PC-3 (cell line): ENCODE measurements at regions of chr3 and their contacts with region 1.

Region 1: GRCh38 chr3:157532529-157533297 is 29.5 kb upstream of the VEPH1 start:
- DNase-seq: peak; percentile 94
- ATAC-seq: peak; percentile 75
- H3K4me3 ChIP-seq: peak overlapping the region; percentile 52
- H3K27ac ChIP-seq: peak overlapping the region; percentile 68
- H3K4me1 ChIP-seq: peaks cover 47% of the 10 kb centered on the region
- H3K27me3 ChIP-seq: no peaks in the 10 kb centered on the region
- CTCF ChIP-seq: peak; percentile 96

Region 2: DNA sequence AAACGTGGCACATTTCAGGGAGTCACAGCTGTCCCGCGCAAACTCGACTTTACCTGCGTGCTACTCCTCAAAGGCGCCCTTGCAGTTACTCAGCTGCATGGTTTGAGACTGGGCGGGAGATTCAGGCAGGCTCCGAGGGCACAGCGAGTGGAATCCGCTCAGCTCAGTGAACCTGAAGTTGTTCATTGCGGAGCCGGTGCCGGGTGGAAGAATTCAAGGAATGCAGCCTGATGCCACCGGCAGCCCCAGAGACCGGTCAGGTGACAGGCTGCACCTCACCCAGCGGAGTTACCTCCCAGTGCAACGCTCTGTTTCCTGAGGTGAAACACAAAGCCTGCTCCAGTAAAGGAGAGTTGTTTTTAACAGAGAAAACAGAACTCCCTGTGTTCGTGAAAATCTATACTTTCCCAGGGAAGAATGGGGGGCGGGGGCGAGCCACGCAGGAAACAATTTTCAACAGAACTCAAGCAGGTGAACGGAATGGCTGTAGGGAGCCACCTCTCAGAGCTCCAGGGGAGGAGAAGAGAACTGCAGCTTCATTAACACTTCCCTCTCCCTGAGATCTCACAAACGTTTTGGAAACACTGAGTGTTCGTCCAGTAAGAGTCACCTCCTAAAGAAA is 33.3 kb before region 1 on chr3:
- CTCF ChIA-PET with region 1: interaction called, 6 read pairs
- POLR2A ChIA-PET with region 1: interaction called, 11 read pairs
- intact Hi-C with region 1: loop called (anchors 1 kb)
- DNase-seq: peak; percentile 93
- ATAC-seq: peak; percentile 89
- H3K4me3 ChIP-seq: peak overlapping the region; percentile 59
- H3K27ac ChIP-seq: peak overlapping the region; percentile 80
- H3K4me1 ChIP-seq: peaks cover 39% of the 10 kb centered on the region
- H3K27me3 ChIP-seq: no peaks in the 10 kb centered on the region
- CTCF ChIP-seq: 0 out of 2 replicates have a peak, but pooled peaks have one; percentile 12

Region 3: GRCh38 chr3:157542711-157543500 is 10.2 kb after region 1 on chr3:
- CTCF ChIA-PET with region 1: interaction called, 19 read pairs
- POLR2A ChIA-PET with region 1: interaction called, 3 read pairs
- intact Hi-C with region 1: no loop called
- DNase-seq: peak; percentile 85
- ATAC-seq: peak; percentile 96
- H3K4me3 ChIP-seq: peak overlapping the region; percentile 74
- H3K27ac ChIP-seq: no peak overlapping the region
- H3K4me1 ChIP-seq: 0 out of 2 replicates have a peak, but pooled peaks cover 4% of the 10 kb centered on the region
- H3K27me3 ChIP-seq: no peaks in the 10 kb centered on the region
- CTCF ChIP-seq: peak; percentile 45; the same call in 1 of the 2 replicates

Region 4: DNA sequence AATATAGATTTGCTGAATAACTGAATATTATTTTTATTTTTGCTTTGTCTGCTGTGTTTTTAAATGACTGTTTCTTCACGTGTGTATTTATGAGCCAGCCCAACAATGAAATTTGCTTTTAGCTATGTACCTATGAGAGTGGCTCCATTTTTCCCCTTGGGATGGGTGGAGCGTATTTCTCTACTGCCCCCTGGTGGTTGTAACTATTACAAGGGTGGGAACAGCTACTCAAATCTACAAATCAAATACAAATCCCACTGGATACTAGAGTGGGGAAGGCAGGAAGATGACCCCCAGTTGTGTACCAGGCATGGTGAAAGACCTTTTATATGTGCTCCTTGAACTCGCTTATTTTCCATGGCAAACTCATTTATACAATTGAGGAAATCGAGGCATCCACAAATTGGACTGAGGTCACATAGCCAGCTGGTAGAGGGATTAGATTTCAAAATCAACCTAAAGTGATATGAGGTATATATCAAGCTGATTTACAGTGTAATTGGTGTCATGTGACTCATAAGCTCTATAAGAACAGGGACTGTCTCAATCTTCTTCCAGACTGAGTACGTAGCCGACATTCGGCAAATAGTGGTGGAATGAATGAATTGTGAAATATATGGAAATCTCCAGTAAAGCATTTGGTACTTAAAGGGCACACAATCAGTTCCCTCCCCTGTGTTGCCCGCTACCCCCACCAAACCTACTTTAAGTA is 40.0 kb after region 1 on chr3:
- CTCF ChIA-PET with region 1: interaction called, 83 read pairs
- POLR2A ChIA-PET with region 1: interaction called, 9 read pairs
- intact Hi-C with region 1: loop called (anchors 1 kb)
- DNase-seq: peak; percentile 81
- ATAC-seq: peak; percentile 66
- H3K4me3 ChIP-seq: no peak overlapping the region
- H3K27ac ChIP-seq: no peak overlapping the region
- H3K4me1 ChIP-seq: peaks cover 15% of the 10 kb centered on the region
- H3K27me3 ChIP-seq: no peaks in the 10 kb centered on the region
- CTCF ChIP-seq: peak; percentile 95

Region 5: DNA sequence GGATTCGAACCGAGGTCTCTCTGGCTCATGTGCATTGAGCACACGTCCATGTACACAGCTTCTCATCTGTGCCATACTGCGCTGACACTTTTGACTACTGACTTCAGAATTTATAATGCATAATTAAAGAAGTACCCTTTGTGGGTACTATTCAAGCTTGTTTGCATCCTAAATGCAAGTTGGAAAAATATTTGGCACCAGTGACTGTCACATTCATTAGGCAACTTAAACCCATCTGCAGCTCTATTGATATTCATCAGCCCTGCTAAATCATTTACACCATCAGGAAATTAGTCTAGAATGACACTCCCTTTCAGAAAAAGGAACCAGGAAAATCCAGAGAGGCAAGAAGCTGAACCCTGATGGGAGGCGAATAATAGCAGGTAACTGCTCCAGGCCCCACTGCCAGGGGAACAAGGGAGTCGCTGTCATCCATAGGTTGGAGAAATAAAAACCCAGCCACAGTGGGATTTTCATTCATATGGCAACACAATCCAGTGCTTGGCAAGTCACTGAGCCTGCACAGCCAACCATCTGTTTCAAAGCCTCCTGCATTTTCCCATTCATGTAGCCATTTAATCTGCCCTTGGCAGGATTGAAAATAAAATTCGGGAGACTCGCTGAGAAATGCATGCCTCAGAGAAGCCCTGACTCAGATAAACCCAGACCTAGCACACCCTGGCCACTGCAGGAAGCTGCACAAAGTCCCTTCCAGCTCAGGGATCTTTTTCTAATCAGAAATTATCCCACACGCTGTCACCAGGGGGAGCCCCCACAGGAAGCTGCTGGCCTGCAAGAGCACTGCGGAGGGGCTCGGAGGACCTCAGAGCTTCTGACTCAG is 73.5 kb after region 1 on chr3:
- CTCF ChIA-PET with region 1: interaction called, 22 read pairs
- POLR2A ChIA-PET with region 1: interaction called, 4 read pairs
- intact Hi-C with region 1: loop called (anchors 2 kb)
- DNase-seq: peak; percentile 90
- ATAC-seq: peak; percentile 99
- H3K4me3 ChIP-seq: peak overlapping the region; percentile 21; the same call in 1 of the 2 replicates
- H3K27ac ChIP-seq: no peak overlapping the region
- H3K4me1 ChIP-seq: peaks cover 4% of the 10 kb centered on the region; the same call in 1 of the 2 replicates
- H3K27me3 ChIP-seq: no peaks in the 10 kb centered on the region
- CTCF ChIP-seq: peak; percentile 93

Region 6: DNA sequence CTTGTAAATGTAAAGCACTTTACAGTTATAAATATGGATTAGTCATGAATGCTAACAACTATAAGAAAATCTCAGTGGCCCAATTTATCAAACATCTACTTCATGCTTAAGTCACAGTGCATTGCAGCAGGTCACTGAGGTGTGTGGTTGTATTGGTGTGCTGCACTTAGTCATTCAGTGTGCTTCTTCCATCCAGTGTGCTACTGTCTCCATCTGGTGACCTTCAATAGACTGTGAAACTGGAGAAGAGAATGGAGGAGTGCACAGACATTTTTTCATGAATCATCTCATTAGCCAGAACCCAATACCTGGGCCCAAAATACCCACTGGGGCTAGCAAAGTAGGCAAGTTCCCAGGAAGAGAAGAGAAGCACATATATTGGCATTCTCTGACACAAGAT is 373.9 kb after region 1 on chr3:
- CTCF ChIA-PET with region 1: no interaction called
- POLR2A ChIA-PET with region 1: no interaction called
- intact Hi-C with region 1: loop called (anchors 1 kb)
- DNase-seq: peak; percentile 57
- ATAC-seq: peak; percentile 98
- H3K4me3 ChIP-seq: no peak overlapping the region
- H3K27ac ChIP-seq: no peak overlapping the region
- H3K4me1 ChIP-seq: no peaks in the 10 kb centered on the region
- H3K27me3 ChIP-seq: no peaks in the 10 kb centered on the region
- CTCF ChIP-seq: peak; percentile 57

Region 7: DNA sequence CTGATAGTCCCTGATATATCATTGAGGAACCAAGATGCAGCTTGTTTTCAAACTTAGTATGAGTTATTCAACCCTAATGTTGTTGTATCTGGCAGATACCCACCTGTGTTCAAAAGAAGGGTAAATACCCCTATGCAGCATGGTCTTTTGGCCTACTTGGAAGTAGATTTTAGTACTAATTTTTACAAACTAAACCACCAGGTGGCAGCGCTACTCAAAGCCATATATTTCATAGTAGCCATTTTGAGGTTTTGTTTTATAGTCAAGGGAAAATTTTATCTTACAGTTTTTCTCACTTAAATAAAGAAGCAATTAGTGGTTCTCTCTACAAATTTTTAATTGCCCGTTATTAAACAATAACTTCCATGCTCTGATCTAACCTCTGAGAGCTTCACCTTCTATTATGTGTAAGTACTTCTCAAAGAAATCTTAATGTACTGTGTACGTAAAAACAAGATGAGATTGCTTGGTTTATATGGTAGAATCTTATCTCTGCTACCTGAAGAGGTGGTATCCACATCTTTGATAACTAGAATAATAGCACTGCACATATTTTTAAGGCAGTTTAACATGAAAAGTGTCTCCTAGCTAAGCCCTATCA is 1006.8 kb after region 1 on chr3:
- CTCF ChIA-PET with region 1: no interaction called
- POLR2A ChIA-PET with region 1: no interaction called
- intact Hi-C with region 1: loop called (anchors 10 kb)
- DNase-seq: peak; percentile 58
- ATAC-seq: no peak; the same call in 1 of the 2 replicates
- H3K4me3 ChIP-seq: no peak overlapping the region
- H3K27ac ChIP-seq: no peak overlapping the region
- H3K4me1 ChIP-seq: no peaks in the 10 kb centered on the region
- H3K27me3 ChIP-seq: no peaks in the 10 kb centered on the region
- CTCF ChIP-seq: peak; percentile 63